WTC11 (cell line): ENCODE measurements at regions of chr2 and their contacts with region 1.

Region 1: GRCh38 chr2:70948337-70949003 is 12.8 kb downstream of the ATP6V1B1 start:
- DNase-seq: peak; percentile 85
- ATAC-seq: peak; percentile 91
- H3K4me3 Mint-ChIP-seq: peak overlapping the region; percentile 62
- H3K27ac Mint-ChIP-seq: no peak overlapping the region
- H3K4me1 Mint-ChIP-seq: peaks cover 16% of the 10 kb centered on the region
- H3K27me3 Mint-ChIP-seq: peaks cover 57% of the 10 kb centered on the region
- CTCF ChIP-seq: peak; percentile 62; the same call in 1 of the 2 replicates

Region 2: GRCh38 chr2:70861777-70862625 is 86.5 kb before region 1 on chr2:
- CTCF ChIA-PET with region 1: interaction called, 88 read pairs
- POLR2A ChIA-PET with region 1: no interaction called
- DNase-seq: peak; percentile 93
- ATAC-seq: peak; percentile 89
- H3K4me3 Mint-ChIP-seq: no peak overlapping the region
- H3K27ac Mint-ChIP-seq: no peak overlapping the region
- H3K4me1 Mint-ChIP-seq: peaks cover 3% of the 10 kb centered on the region; the same call in 1 of the 2 replicates
- H3K27me3 Mint-ChIP-seq: peaks cover 85% of the 10 kb centered on the region
- CTCF ChIP-seq: peak; percentile 92

Region 3: GRCh38 chr2:70907130-70908057 is 41.1 kb before region 1 on chr2:
- CTCF ChIA-PET with region 1: interaction called, 22 read pairs
- POLR2A ChIA-PET with region 1: no interaction called
- DNase-seq: no peak
- ATAC-seq: peak; percentile 10; the same call in 1 of the 2 replicates
- H3K4me3 Mint-ChIP-seq: peak overlapping the region; percentile 57
- H3K27ac Mint-ChIP-seq: no peak overlapping the region
- H3K4me1 Mint-ChIP-seq: peaks cover 31% of the 10 kb centered on the region
- H3K27me3 Mint-ChIP-seq: peaks cover 100% of the 10 kb centered on the region
- CTCF ChIP-seq: no peak

Region 4: GRCh38 chr2:70935468-70936164 is 12.9 kb before region 1 on chr2 and contains the start of gene ATP6V1B1:
- CTCF ChIA-PET with region 1: interaction called, 91 read pairs
- POLR2A ChIA-PET with region 1: no interaction called
- DNase-seq: peak; percentile 53
- ATAC-seq: peak; percentile 20
- H3K4me3 Mint-ChIP-seq: no peak within 1 kb of the TSS
- H3K27ac Mint-ChIP-seq: no peak within 1 kb of the TSS
- H3K4me1 Mint-ChIP-seq: peaks cover 25% of the 10 kb centered on the region
- H3K27me3 Mint-ChIP-seq: peaks cover 48% of the 10 kb centered on the region
- CTCF ChIP-seq: no peak
- total RNA-seq, gene ATP6V1B1: not detected in 3 replicates

Region 5: DNA sequence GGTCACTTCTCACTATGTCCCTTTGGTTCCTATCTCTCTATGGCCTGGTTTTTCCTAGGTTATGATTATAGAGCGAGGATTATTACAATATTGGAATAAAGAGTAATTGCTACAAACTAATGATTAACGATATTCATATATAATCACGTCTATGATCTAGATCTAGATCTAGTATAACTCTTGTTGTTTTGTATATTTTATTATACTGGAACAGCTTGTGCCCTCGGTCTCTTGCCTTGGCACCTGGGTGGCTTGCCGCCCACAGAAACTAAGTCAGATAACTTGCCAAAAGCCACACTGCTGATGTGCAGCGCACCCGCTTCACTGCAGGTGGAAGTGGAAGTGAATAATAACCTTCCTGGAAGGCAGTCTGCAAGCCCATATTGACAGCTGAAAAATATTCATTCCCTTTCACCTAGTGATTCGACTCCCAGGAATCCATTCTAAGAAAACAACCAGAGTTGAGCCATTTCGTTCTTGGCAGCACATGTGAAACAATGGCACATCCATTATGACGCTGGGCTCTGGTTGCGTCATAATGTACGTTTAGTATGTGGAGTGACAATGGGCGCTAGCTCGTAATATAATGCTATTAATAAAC is 29.2 kb after region 1 on chr2:
- CTCF ChIA-PET with region 1: interaction called, 11 read pairs
- POLR2A ChIA-PET with region 1: no interaction called
- DNase-seq: no peak
- ATAC-seq: no peak
- H3K4me3 Mint-ChIP-seq: peak overlapping the region; percentile 82
- H3K27ac Mint-ChIP-seq: no peak overlapping the region
- H3K4me1 Mint-ChIP-seq: peaks cover 18% of the 10 kb centered on the region
- H3K27me3 Mint-ChIP-seq: peaks cover 50% of the 10 kb centered on the region
- CTCF ChIP-seq: peak; percentile 3; the same call in 1 of the 2 replicates

Region 6: GRCh38 chr2:71000780-71001591 is 52.5 kb after region 1 on chr2:
- CTCF ChIA-PET with region 1: interaction called, 12 read pairs
- POLR2A ChIA-PET with region 1: no interaction called
- DNase-seq: peak; percentile 77
- ATAC-seq: peak; percentile 72
- H3K4me3 Mint-ChIP-seq: peak overlapping the region; percentile 43
- H3K27ac Mint-ChIP-seq: no peak overlapping the region
- H3K4me1 Mint-ChIP-seq: peaks cover 18% of the 10 kb centered on the region
- H3K27me3 Mint-ChIP-seq: peaks cover 45% of the 10 kb centered on the region
- CTCF ChIP-seq: peak; percentile 87